A673 (cell line): ENCODE measurements at regions of chr12 and their contacts with region 1.

Region 1: DNA sequence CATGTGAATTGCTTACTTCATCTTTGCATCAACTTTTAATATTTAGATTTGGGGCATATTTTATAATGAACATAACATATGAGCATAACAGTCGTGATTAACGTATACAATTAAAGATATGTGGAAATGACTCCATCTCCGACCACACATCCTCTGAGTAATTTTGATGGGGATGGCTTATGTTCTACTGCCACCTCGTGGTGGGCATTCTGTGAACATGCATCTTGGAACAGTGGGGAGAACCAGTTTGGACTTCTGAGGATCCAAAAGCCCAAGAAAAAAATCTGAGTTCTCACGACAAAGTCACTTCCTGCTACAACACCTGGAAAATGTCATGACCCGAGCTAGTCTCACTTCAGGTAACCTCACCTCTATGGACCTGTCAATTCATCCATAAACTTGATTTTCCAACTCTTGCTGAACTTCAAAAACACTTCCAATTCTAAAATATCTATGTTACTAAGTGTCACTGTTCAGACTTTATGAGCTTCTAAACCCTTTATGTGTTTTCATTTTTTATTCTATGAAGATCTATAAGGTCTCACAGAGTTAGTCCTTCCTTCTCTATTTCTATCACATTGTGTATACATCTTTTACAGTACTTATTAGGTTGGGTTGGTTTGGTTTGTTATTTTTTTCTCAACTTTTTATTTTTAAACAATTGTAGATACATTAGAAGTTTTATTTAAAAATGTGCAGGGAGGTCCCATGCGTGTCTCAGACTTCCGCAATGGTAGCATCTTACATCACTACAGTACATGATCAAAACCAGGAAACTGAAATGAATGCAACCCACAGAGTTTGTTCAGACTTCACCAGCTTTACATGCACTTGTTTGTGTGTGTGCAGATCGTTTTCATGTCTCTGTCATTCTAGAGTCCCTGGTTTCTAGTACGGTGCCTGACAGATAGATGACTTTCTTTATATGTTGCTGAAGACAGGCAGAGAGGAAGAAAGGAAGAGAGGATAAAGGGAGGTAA is 38.2 kb upstream of the STAB2 start:
- DNase-seq: peak; percentile 75
- H3K4me3 ChIP-seq: no peak overlapping the region
- H3K27ac ChIP-seq: no peak overlapping the region
- H3K4me1 ChIP-seq: no peaks in the 10 kb centered on the region
- H3K27me3 ChIP-seq: peaks cover 54% of the 10 kb centered on the region
- CTCF ChIP-seq: peak; percentile 84

Region 2: GRCh38 chr12:102879144-102879763 is 669.7 kb before region 1 on chr12:
- CTCF ChIA-PET with region 1: interaction called, 7 read pairs
- POLR2A ChIA-PET with region 1: no interaction called
- intact Hi-C with region 1: loop called (anchors 1 kb)
- DNase-seq: peak; percentile 77
- H3K4me3 ChIP-seq: no peak overlapping the region
- H3K27ac ChIP-seq: no peak overlapping the region
- H3K4me1 ChIP-seq: no peaks in the 10 kb centered on the region
- H3K27me3 ChIP-seq: peaks cover 8% of the 10 kb centered on the region
- CTCF ChIP-seq: peak; percentile 61

Region 3: GRCh38 chr12:102948941-102949352 is 600.0 kb before region 1 on chr12:
- CTCF ChIA-PET with region 1: interaction called, 8 read pairs
- POLR2A ChIA-PET with region 1: no interaction called
- intact Hi-C with region 1: loop called (anchors 1 kb)
- DNase-seq: peak; percentile 60
- H3K4me3 ChIP-seq: no peak overlapping the region
- H3K27ac ChIP-seq: no peak overlapping the region
- H3K4me1 ChIP-seq: no peaks in the 10 kb centered on the region
- H3K27me3 ChIP-seq: peaks cover 77% of the 10 kb centered on the region
- CTCF ChIP-seq: peak; percentile 92

Region 4: DNA sequence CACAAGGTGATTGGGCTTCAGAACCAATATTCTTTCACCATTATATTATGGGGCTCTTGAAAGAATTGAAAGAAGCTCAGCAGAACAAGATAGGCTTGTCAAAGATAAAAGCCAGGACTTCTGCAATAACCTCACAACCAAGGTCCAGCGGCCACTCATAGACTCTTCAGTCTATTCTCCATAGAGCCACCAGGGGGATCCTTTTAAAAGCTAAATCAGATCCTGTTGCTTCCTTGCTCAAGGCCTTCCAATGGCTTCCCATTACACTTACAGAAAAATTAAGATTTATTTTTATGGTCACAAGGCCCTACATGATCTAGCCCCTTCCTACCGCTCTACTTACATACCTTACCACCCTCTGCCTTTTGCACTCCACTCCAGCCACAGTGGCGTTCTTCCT is 222.7 kb before region 1 on chr12:
- CTCF ChIA-PET with region 1: no interaction called
- POLR2A ChIA-PET with region 1: no interaction called
- intact Hi-C with region 1: loop called (anchors 2 kb)
- DNase-seq: peak; percentile 26
- H3K4me3 ChIP-seq: no peak overlapping the region
- H3K27ac ChIP-seq: no peak overlapping the region
- H3K4me1 ChIP-seq: no peaks in the 10 kb centered on the region
- H3K27me3 ChIP-seq: peaks cover 4% of the 10 kb centered on the region
- CTCF ChIP-seq: peak; percentile 48